ENCODE measurements at regions of chr1 and their contacts with region 1.

Region 1: GRCh38 chr1:13748610-13749505 is 48.9 kb downstream of the PRDM2 start:
- DNase-seq: peak; percentile 98
- H3K4me3 ChIP-seq: peak overlapping the region; percentile 86
- H3K27ac ChIP-seq: peak overlapping the region; percentile 97
- H3K4me1 ChIP-seq: peaks cover 11% of the 10 kb centered on the region
- H3K27me3 ChIP-seq: no peaks in the 10 kb centered on the region
- CTCF ChIP-seq: no peak

Region 2: GRCh38 chr1:13792419-13792818 is 43.6 kb after region 1 on chr1:
- intact Hi-C with region 1: loop called (anchors 10 kb)
- DNase-seq: no peak
- H3K4me3 ChIP-seq: no peak overlapping the region
- H3K27ac ChIP-seq: no peak overlapping the region
- H3K4me1 ChIP-seq: no peaks in the 10 kb centered on the region
- H3K27me3 ChIP-seq: no peaks in the 10 kb centered on the region
- CTCF ChIP-seq: no peak

Measured in colonic mucosa (tissue), 4 donors.